H1 (cell line): ENCODE measurements at regions of chr15 and their contacts with region 1.

Region 1: GRCh38 chr15:40367686-40368611 is 9.9 kb downstream of the DISP2 start:
- DNase-seq: peak; percentile 81 to 89
- H3K4me3 ChIP-seq: peak overlapping the region in 3 of 4 experiments; percentile 15 to 46 (median 23); a peak in 4 of 8 replicates
- H3K27ac ChIP-seq: no peak overlapping the region
- H3K4me1 ChIP-seq: peaks cover 2 to 6% (median 4%) of the 10 kb centered on the region in 4 experiments; a peak in 4 of 7 replicates
- H3K27me3 ChIP-seq: peaks cover 5 to 27% (median 23%) of the 10 kb centered on the region in 4 experiments
- CTCF ChIP-seq: peak; percentile 77 to 89 (median 77)
- EP300 ChIP-seq: peak; percentile 58 to 77; a peak in 2 of 3 replicates
- POLR2A ChIP-seq: no peak
- RAD21 ChIP-seq: peak; percentile 41 to 64

Region 2: DNA sequence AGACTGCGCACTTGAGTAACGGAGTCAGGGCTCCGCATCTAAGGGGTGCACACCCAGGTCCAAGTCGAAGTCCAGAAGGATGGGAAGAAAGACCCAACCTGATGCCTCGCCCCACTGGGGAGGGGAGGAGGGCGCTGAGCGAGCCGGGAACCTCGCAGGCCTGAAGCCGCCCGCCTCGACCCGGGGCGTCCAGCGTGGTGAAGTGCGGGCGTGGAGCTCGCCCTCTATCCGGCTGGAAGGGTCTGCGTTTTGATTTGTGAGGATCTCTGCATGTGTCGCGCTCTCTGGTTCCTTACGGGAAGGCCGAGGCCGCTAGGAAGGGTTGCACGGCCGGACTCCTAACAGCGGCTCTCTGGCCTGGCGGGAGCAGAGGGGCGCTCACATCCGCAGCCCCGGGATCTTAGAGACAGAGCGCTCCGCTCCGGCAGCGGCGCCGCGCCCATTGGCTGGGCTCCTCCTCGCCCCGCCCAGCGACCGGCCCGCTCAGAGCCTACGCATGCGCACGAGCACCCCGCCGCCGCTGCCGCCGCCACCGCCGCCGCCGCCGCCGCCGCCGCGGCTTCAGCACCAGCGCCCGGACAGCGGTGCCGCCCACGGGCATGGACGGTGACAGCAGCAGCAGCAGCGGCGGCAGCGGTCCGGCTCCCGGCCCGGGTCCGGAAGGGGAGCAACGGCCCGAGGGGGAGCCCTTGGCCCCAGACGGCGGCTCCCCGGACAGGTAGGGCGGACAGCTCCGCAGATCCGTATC is 10.1 kb before region 1 on chr15 and contains the start of gene DISP2:
- CTCF ChIA-PET with region 1: interaction called, 452 read pairs
- POLR2A ChIA-PET with region 1: interaction called, 3 read pairs
- DNase-seq: peak in 1 of 2 experiments; percentile 98
- H3K4me3 ChIP-seq: peak within 1 kb of the TSS; percentile 44 to 69 (median 62)
- H3K27ac ChIP-seq: no peak within 1 kb of the TSS
- H3K4me1 ChIP-seq: peaks cover 11 to 22% (median 16%) of the 10 kb centered on the region in 4 experiments
- H3K27me3 ChIP-seq: peaks cover 0 to 18% (median 8%) of the 10 kb centered on the region in 4 experiments; a peak in 3 of 7 replicates
- CTCF ChIP-seq: no peak
- EP300 ChIP-seq: peak in 1 of 2 experiments; percentile 84; a peak in 1 of 3 replicates
- POLR2A ChIP-seq: no peak
- RAD21 ChIP-seq: no peak
- total RNA-seq, gene DISP2: 1.2 and 3.4 TPM in 2 replicates

Region 3: GRCh38 chr15:40388946-40389841 is 21.2 kb after region 1 on chr15:
- CTCF ChIA-PET with region 1: interaction called, 49 read pairs
- POLR2A ChIA-PET with region 1: interaction called, 24 read pairs
- DNase-seq: no peak
- H3K4me3 ChIP-seq: no peak overlapping the region
- H3K27ac ChIP-seq: no peak overlapping the region
- H3K4me1 ChIP-seq: no peaks in the 10 kb centered on the region; a peak in 1 of 7 replicates
- H3K27me3 ChIP-seq: no peaks in the 10 kb centered on the region
- CTCF ChIP-seq: no peak
- EP300 ChIP-seq: no peak
- POLR2A ChIP-seq: no peak
- RAD21 ChIP-seq: no peak

Region 4: DNA sequence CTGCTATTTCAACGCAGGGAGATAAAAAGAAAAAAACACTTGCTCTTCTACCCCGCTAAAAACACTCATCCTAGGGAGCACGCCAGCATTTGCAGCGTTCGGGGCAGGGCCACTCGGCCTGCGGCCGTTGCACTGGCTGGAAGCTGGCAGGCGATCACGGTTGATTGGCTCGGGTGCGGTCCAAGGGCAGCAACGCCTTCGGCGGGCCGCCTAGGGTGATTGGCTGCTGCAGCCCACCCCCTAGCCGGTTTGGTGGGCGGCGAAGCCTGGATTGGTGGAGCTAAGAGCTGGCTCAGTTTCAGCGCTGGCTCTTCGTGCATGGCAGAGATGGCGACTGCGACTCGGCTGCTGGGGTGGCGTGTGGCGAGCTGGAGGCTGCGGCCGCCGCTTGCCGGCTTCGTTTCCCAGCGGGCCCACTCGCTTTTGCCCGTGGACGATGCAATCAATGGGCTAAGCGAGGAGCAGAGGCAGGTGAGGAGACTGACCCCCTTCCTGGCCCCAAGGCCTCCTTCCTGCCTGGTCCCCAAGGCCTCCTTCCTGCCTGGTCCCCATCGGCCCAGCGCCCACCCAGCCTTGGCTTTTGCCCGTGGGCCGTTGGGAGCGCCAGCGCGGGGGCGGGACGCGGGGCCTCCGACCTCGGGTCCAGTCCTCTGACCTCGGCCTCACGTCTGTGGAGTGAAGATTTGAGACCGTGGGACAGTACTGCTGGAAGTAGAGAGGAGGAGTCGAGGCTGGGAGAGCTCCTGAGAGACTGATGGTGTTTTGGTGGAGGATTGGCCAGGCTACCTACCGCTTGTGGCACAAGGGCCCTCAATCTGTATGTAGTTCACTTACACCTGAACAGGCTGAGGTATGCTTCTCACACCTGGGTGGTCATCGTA is 37.8 kb after region 1 on chr15 and contains the start of gene IVD:
- CTCF ChIA-PET with region 1: interaction called, 17 read pairs
- POLR2A ChIA-PET with region 1: interaction called, 4 read pairs
- DNase-seq: peak; percentile 78 to 92
- H3K4me3 ChIP-seq: peak within 1 kb of the TSS; percentile 67 to 82 (median 74)
- H3K27ac ChIP-seq: peak within 1 kb of the TSS; percentile 72; the same call in 1 of the 2 replicates
- H3K4me1 ChIP-seq: peaks cover 0 to 4% (median 1%) of the 10 kb centered on the region in 4 experiments; a peak in 3 of 7 replicates
- H3K27me3 ChIP-seq: no peaks in the 10 kb centered on the region
- CTCF ChIP-seq: no peak
- EP300 ChIP-seq: no peak
- POLR2A ChIP-seq: peak; percentile 84 to 88
- RAD21 ChIP-seq: no peak
- total RNA-seq, gene IVD: 78.8 and 80.0 TPM in 2 replicates